ENCODE measurements at regions of chr1 and their contacts with region 1.

Region 1: DNA sequence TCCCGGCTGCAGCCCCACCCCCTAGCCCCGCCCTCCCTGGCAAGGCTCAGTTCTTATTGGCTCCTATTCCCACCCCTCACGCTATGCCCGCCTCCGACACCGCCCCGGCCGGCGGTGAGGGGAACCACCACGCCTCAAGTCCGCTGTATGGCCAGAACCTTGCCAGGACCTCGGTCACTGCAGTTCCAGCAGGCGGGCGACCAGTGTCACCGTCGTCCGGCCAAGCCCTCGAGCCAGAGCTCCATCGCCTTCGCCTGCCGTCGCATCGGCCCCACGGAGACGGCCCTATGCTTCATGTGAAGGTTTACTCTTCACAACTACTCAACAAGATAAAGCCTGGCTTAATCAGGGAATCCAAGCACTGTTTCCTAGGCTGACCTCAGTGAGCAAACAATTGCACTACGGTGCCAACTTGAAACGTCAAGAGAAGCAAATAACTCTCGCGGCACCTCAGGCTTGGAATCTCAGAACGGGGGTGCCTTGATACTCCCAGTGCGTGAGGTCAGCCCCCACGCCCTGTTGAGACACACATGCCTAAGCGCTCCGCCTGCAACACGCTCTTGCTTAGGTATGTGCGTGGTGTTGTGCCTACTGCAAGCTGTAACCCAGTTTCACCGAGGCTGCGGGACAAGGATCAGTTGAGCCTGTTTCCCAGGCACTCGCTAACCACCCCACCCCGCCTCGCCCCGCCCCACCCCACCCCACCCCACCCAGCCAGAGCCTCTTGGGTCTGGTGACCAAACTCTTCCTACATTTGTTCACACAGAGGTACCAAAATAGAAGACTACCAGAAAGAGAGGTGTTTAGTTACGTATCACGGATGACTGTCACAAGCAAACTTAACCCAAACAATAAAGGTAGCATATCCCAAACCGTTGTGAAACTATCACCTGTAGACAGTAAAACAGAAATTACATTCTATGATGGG is 498 bp upstream of the DENND2C start:
- DNase-seq: peak; percentile 95
- H3K4me3 Mint-ChIP-seq: peak overlapping the region; percentile 84
- H3K27ac Mint-ChIP-seq: peak overlapping the region; percentile 96
- H3K4me1 Mint-ChIP-seq: peaks cover 24% of the 10 kb centered on the region
- H3K27me3 Mint-ChIP-seq: peaks cover 3% of the 10 kb centered on the region
- CTCF ChIP-seq: no peak

Region 2: DNA sequence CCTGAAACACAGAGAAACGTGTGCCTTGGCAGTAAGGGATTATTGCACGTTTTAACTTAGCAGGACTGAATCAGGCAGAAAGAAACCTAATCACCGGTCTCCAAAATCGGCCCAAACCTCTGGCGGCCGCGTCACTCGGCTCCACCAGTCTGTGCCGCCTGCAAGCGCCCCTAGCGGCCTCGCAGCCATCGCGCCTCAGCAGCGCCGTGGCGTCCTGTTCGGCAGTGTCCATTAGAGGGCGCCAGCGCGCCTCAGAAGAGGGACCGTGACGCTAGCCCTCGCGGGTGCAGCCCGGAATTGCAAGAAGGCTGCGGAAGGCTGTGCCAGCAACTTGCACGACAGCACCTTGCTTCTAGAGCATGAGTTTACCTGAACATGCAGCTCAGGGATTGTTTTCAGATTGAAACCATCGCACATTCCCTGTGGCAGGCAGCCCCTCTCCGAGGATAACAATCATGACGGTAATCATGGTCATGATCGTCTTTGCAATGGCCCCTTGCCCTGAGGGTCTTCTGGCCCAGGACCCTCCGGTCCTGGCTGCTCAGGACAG is 323.8 kb before region 1 on chr1:
- CTCF ChIA-PET with region 1: interaction called, 29 read pairs
- POLR2A ChIA-PET with region 1: interaction called, 6 read pairs
- intact Hi-C with region 1: loop called (anchors 1 kb)
- DNase-seq: peak; percentile 93
- H3K4me3 Mint-ChIP-seq: peak overlapping the region; percentile 84
- H3K27ac Mint-ChIP-seq: peak overlapping the region; percentile 85
- H3K4me1 Mint-ChIP-seq: peaks cover 4% of the 10 kb centered on the region
- H3K27me3 Mint-ChIP-seq: no peaks in the 10 kb centered on the region
- CTCF ChIP-seq: peak; percentile 100

Region 3: GRCh38 chr1:114511032-114511785 is 159.1 kb before region 1 on chr1 and contains the start of gene TRIM33:
- CTCF ChIA-PET with region 1: interaction called, 3 read pairs
- POLR2A ChIA-PET with region 1: interaction called, 52 read pairs
- intact Hi-C with region 1: loop called (anchors 2 kb)
- DNase-seq: peak; percentile 92
- H3K4me3 Mint-ChIP-seq: peak within 1 kb of the TSS; percentile 79
- H3K27ac Mint-ChIP-seq: peak within 1 kb of the TSS; percentile 97
- H3K4me1 Mint-ChIP-seq: peaks cover 34% of the 10 kb centered on the region
- H3K27me3 Mint-ChIP-seq: no peaks in the 10 kb centered on the region
- CTCF ChIP-seq: no peak
- total RNA-seq, gene TRIM33: 33.2 and 38.3 TPM in 2 replicates

Region 4: GRCh38 chr1:114597949-114598348 is 72.4 kb before region 1 on chr1:
- CTCF ChIA-PET with region 1: interaction called, 5 read pairs
- POLR2A ChIA-PET with region 1: interaction called, 12 read pairs
- intact Hi-C with region 1: no loop called
- DNase-seq: no peak
- H3K4me3 Mint-ChIP-seq: no peak overlapping the region
- H3K27ac Mint-ChIP-seq: no peak overlapping the region
- H3K4me1 Mint-ChIP-seq: no peaks in the 10 kb centered on the region
- H3K27me3 Mint-ChIP-seq: no peaks in the 10 kb centered on the region
- CTCF ChIP-seq: no peak

Region 5: GRCh38 chr1:114620419-114620818 is 49.9 kb before region 1 on chr1:
- CTCF ChIA-PET with region 1: interaction called, 4 read pairs
- POLR2A ChIA-PET with region 1: interaction called, 54 read pairs
- intact Hi-C with region 1: no loop called
- DNase-seq: no peak
- H3K4me3 Mint-ChIP-seq: no peak overlapping the region
- H3K27ac Mint-ChIP-seq: no peak overlapping the region
- H3K4me1 Mint-ChIP-seq: no peaks in the 10 kb centered on the region
- H3K27me3 Mint-ChIP-seq: no peaks in the 10 kb centered on the region
- CTCF ChIP-seq: no peak

Region 6: GRCh38 chr1:114660224-114660623 is 10.1 kb before region 1 on chr1:
- CTCF ChIA-PET with region 1: interaction called, 4 read pairs
- POLR2A ChIA-PET with region 1: interaction called, 19 read pairs
- intact Hi-C with region 1: no loop called
- DNase-seq: no peak
- H3K4me3 Mint-ChIP-seq: no peak overlapping the region
- H3K27ac Mint-ChIP-seq: no peak overlapping the region
- H3K4me1 Mint-ChIP-seq: peaks cover 11% of the 10 kb centered on the region
- H3K27me3 Mint-ChIP-seq: no peaks in the 10 kb centered on the region
- CTCF ChIP-seq: no peak

Region 7: DNA sequence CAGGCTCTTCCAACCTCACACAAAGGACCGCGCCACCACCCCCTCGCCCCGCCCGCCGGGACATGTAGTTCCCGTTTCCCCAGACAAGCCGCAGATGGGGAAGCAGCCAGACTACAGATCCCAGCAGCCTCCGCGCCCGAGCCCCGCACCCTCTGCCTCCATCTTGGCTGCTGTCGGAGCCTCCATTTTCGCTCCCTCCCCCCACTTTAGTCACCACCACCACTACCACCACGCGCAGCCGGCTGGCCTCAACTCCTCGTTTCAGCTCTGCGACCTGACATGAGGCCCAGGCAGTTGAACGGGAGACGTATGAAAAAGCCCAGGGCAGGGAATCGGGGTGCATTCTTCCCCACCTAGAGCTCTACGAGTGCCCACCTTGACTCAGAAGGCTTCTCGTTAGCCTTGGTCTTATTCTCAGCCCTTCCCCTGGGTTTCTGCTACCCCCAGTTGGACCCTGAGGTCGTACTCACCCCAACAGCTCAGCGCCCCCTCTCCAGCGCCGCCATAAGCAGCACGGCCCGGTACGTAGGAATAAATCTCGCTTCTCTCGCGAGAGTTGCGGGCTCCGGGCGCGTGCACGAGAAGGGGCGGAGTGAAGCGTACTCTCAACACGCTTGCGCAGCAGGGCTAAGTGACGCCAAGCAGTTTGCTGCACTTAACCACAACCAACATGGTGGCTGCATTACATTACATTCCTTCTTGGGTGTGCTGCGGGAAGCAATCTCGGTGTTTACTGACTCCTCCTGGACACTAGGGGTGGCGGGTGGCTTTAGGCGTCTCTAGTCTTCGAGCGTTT is 87.3 kb after region 1 on chr1 and contains the start of gene CSDE1:
- CTCF ChIA-PET with region 1: no interaction called
- POLR2A ChIA-PET with region 1: interaction called, 16 read pairs
- intact Hi-C with region 1: no loop called
- DNase-seq: peak; percentile 98
- H3K4me3 Mint-ChIP-seq: peak within 1 kb of the TSS; percentile 97
- H3K27ac Mint-ChIP-seq: peak within 1 kb of the TSS; percentile 100
- H3K4me1 Mint-ChIP-seq: peaks cover 29% of the 10 kb centered on the region
- H3K27me3 Mint-ChIP-seq: no peaks in the 10 kb centered on the region
- CTCF ChIP-seq: no peak
- total RNA-seq, gene CSDE1: 535 and 580 TPM in 2 replicates

Measured in MCF 10A (cell line).